K562 (cell line): ENCODE measurements at regions of chr22 and their contacts with region 1.

Region 1: GRCh38 chr22:21754523-21754922 is 18.9 kb upstream of the YPEL1 start:
- DNase-seq: peak; percentile 100
- ATAC-seq: peak; percentile 93
- H3K4me3 ChIP-seq: peak overlapping the region; percentile 4; the same call in 1 of the 2 replicates
- H3K27ac ChIP-seq: peak overlapping the region; percentile 70
- H3K4me1 ChIP-seq: peaks cover 43% of the 10 kb centered on the region in 2 experiments
- H3K27me3 ChIP-seq: no peaks in the 10 kb centered on the region
- CTCF ChIP-seq: no peak
- EP300 ChIP-seq: no peak
- POLR2A ChIP-seq: no peak
- RAD21 ChIP-seq: no peak

Region 2: DNA sequence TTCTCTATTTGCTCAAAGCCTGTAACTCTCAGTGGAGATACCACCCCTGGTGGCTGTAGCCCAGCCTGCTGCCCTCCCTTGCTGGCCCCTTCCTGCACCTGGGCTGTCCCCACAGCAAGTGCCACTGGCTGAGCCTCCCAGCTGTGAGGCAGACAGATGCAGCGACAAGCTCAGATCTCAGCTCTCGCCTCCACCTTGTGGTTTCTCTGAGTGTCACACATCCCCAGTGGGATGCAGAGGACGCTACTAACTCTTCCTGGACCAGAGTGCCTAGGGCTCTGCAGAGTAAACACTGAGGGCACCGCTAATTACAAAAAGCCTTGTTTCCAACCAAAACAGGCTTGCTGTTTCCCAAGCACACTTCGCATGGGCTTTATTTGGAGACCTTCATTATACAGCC is 27.9 kb before region 1 on chr22:
- CTCF ChIA-PET with region 1: no interaction called
- POLR2A ChIA-PET with region 1: interaction called, 11 read pairs
- in situ Hi-C with region 1: no loop called
- intact Hi-C with region 1: loop called (anchors 2 kb)
- DNase-seq: peak; percentile 77 to 94 (median 86)
- ATAC-seq: peak; percentile 98
- H3K4me3 ChIP-seq: no peak overlapping the region
- H3K27ac ChIP-seq: no peak overlapping the region
- H3K4me1 ChIP-seq: peaks cover 0 to 13% of the 10 kb centered on the region in 2 experiments; a peak in 2 of 5 replicates
- H3K27me3 ChIP-seq: peaks cover 37 to 84% of the 10 kb centered on the region in 2 experiments
- CTCF ChIP-seq: peak in 2 of 3 experiments; percentile 99; a peak in 4 of 6 replicates
- EP300 ChIP-seq: no peak
- POLR2A ChIP-seq: no peak
- RAD21 ChIP-seq: peak in 1 of 2 experiments; percentile 97; a peak in 2 of 4 replicates

Region 3: GRCh38 chr22:21735200-21736076 is 19.1 kb before region 1 on chr22 and contains the start of gene YPEL1:
- CTCF ChIA-PET with region 1: no interaction called
- POLR2A ChIA-PET with region 1: interaction called, 23 read pairs
- in situ Hi-C with region 1: no loop called
- intact Hi-C with region 1: loop called (anchors 1 kb)
- DNase-seq: peak; percentile 100
- ATAC-seq: peak; percentile 96
- H3K4me3 ChIP-seq: peak within 1 kb of the TSS; percentile 52
- H3K27ac ChIP-seq: peak within 1 kb of the TSS; percentile 42
- H3K4me1 ChIP-seq: peaks cover 17 to 29% of the 10 kb centered on the region in 2 experiments
- H3K27me3 ChIP-seq: peaks cover 52 to 57% of the 10 kb centered on the region in 2 experiments
- CTCF ChIP-seq: peak in 1 of 3 experiments; percentile 1; a peak in 2 of 6 replicates
- EP300 ChIP-seq: peak; percentile 43
- POLR2A ChIP-seq: no peak
- RAD21 ChIP-seq: peak in 1 of 2 experiments; percentile 59; a peak in 2 of 4 replicates
- polyA plus RNA-seq, gene YPEL1: 0.07 to 0.10 TPM

Region 4: DNA sequence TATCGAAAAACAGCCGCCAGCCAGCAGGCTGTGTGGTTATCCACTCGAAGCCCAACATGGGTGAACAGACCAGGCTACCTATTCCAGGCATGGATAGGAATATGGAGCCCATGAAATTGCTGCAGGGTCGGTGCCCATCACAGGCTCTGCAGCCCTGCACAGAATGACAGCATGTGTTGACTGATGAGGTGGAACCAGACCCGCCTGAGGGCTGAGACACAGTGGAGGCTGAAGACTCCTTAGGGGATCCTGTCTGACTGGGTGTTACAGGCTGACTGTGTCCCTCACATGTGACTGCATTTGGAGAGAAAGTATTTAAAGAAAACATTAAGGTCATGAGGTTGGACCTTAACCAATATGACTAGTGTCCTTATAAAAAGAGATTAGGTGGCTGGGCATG is 12.7 kb before region 1 on chr22:
- CTCF ChIA-PET with region 1: interaction called, 3 read pairs
- POLR2A ChIA-PET with region 1: interaction called, 43 read pairs
- in situ Hi-C with region 1: no loop called
- intact Hi-C with region 1: loop called (anchors 1 kb)
- DNase-seq: no peak
- ATAC-seq: peak; percentile 7; the same call in 2 of the 3 replicates
- H3K4me3 ChIP-seq: no peak overlapping the region
- H3K27ac ChIP-seq: no peak overlapping the region
- H3K4me1 ChIP-seq: peaks cover 7 to 13% of the 10 kb centered on the region in 2 experiments; a peak in 4 of 5 replicates
- H3K27me3 ChIP-seq: peaks cover 53 to 60% of the 10 kb centered on the region in 2 experiments
- CTCF ChIP-seq: no peak
- EP300 ChIP-seq: no peak
- POLR2A ChIP-seq: no peak
- RAD21 ChIP-seq: no peak

Region 5: GRCh38 chr22:21766691-21767462 is 12.4 kb after region 1 on chr22:
- CTCF ChIA-PET with region 1: no interaction called
- POLR2A ChIA-PET with region 1: interaction called, 258 read pairs
- in situ Hi-C with region 1: no loop called
- intact Hi-C with region 1: no loop called
- DNase-seq: peak in 1 of 4 experiments; percentile 31
- ATAC-seq: peak; percentile 12
- H3K4me3 ChIP-seq: no peak overlapping the region
- H3K27ac ChIP-seq: no peak overlapping the region
- H3K4me1 ChIP-seq: peaks cover 0 to 5% of the 10 kb centered on the region in 2 experiments; a peak in 1 of 5 replicates
- H3K27me3 ChIP-seq: no peaks in the 10 kb centered on the region
- CTCF ChIP-seq: no peak
- EP300 ChIP-seq: no peak
- POLR2A ChIP-seq: no peak
- RAD21 ChIP-seq: no peak

Region 6: DNA sequence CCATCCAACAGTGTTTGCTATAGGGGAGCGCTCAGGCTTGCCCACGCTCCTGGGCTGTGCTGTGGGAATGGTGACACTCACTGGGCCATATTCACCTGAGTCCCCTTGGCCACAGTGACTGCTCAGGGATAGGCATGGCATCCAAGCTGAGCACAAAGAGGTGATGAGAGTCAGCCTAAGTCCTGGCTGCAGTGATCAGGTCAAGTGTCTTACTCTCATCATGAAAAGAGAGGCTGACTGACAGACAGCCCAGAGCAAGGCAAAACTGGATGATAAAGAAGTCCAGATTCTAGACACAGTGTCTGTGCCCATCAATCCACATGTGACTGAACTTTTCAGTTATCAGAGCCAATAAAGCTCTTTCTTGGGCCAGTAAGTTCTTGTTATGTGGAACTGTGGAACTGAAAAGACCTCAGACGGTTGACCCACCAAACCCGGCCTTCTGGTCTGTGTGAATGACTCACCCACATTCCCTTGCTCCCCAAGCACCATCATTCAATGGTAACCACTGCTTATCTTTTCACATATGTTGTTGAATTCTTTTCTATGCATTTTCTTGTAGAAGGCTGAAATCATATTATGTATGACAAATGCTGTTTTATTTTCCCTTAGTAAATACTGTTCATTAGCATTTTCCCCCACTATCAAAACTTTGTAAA is 24.3 kb after region 1 on chr22:
- CTCF ChIA-PET with region 1: no interaction called
- POLR2A ChIA-PET with region 1: interaction called, 69 read pairs
- in situ Hi-C with region 1: no loop called
- intact Hi-C with region 1: loop called (anchors 2 kb)
- DNase-seq: peak; percentile 84 to 90 (median 88)
- ATAC-seq: peak; percentile 61
- H3K4me3 ChIP-seq: no peak overlapping the region
- H3K27ac ChIP-seq: peak overlapping the region; percentile 7; the same call in 2 of the 3 replicates
- H3K4me1 ChIP-seq: peaks cover 0 to 12% of the 10 kb centered on the region in 2 experiments; a peak in 2 of 5 replicates
- H3K27me3 ChIP-seq: no peaks in the 10 kb centered on the region
- CTCF ChIP-seq: no peak
- EP300 ChIP-seq: peak; percentile 30; the same call in 1 of the 2 replicates
- POLR2A ChIP-seq: no peak
- RAD21 ChIP-seq: no peak